Motor neuron (in vitro differentiated cells): ENCODE measurements at regions of chr9 and their contacts with region 1.

Region 1: GRCh38 chr9:100589582-100589981 is 11.7 kb downstream of the CAVIN4 start:
- ATAC-seq: peak in 7 of 8 experiments; percentile 50 to 82 (median 70)
- H3K4me3 ChIP-seq: no peak overlapping the region
- H3K27ac ChIP-seq: no peak overlapping the region
- H3K4me1 ChIP-seq: no peaks in the 10 kb centered on the region

Region 2: DNA sequence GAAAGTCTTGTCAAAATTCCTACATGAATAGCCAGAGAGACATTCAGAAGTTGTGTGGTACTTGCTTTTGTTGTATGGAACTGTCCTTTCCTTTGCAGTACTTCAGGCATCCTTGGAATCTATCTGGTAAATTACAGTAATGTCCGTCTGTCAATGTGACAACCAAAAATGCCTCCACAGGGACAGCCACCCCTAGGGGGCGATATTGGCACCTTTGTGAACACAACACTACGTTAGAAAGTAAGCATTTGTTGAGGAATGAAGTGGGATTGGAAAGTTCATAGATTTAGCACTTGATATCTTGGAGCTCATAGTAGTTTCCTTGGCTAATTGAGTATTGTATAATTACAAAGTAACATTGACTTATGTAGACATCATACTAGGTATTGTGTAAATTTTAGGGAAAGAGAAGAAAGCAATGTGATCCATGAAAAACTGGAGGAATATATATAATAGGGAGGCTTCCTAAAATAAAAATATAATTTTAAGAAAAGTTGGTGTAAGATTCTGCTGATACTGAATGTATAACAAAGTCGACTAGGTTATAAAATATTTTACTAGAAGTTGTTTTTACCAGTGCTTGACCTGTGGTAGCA is 83.9 kb before region 1 on chr9:
- in situ Hi-C with region 1: loop called in 1 of 9 experiments (anchors 10 kb)
- ATAC-seq: peak in 3 of 8 experiments; percentile 71 to 85 (median 76)
- H3K4me3 ChIP-seq: no peak overlapping the region
- H3K27ac ChIP-seq: no peak overlapping the region
- H3K4me1 ChIP-seq: no peaks in the 10 kb centered on the region

Region 3: GRCh38 chr9:100730086-100730485 is 140.5 kb after region 1 on chr9:
- in situ Hi-C with region 1: no loop called
- ATAC-seq: peak in 5 of 8 experiments; percentile 17 to 91 (median 83)
- H3K4me3 ChIP-seq: no peak overlapping the region
- H3K27ac ChIP-seq: peak overlapping the region in 1 of 2 donors; percentile 35
- H3K4me1 ChIP-seq: peaks cover 13 to 27% of the 10 kb centered on the region in 2 donors